ENCODE measurements at regions of chr6 and their contacts with region 1.

Region 1: GRCh38 chr6:27893059-27893835 is 18.9 kb downstream of the OR2B2 start:
- DNase-seq: peak; percentile 81 to 91
- H3K4me3 ChIP-seq: peak overlapping the region; percentile 53 to 72 (median 71)
- H3K27ac ChIP-seq: peak overlapping the region; percentile 80 to 88
- H3K4me1 ChIP-seq: no peaks in the 10 kb centered on the region
- H3K27me3 ChIP-seq: peaks cover 3 to 14% of the 10 kb centered on the region in 2 donors
- CTCF ChIP-seq: no peak
- POLR2A ChIP-seq: peak; percentile 58

Region 2: GRCh38 chr6:27177485-27178406 is 715.5 kb before region 1 on chr6:
- intact Hi-C with region 1: loop called (anchors 10 kb)
- DNase-seq: peak; percentile 80 to 84
- H3K4me3 ChIP-seq: peak overlapping the region; percentile 88 to 90 (median 89)
- H3K27ac ChIP-seq: peak overlapping the region; percentile 85 to 87
- H3K4me1 ChIP-seq: no peaks in the 10 kb centered on the region
- H3K27me3 ChIP-seq: no peaks in the 10 kb centered on the region
- CTCF ChIP-seq: peak in 2 of 3 donors; percentile 18 to 43
- POLR2A ChIP-seq: no peak

Measured in breast epithelium (tissue), 4 donors.